Right ventricle myocardium superior (tissue), 1 donor: ENCODE measurements at regions of chr18 and their contacts with region 1.

Region 1: GRCh38 chr18:31983020-31983419 is 35.6 kb upstream of the RNF125 start:
- DNase-seq: no peak
- ATAC-seq: peak; percentile 73

Region 2: GRCh38 chr18:32018331-32019250 is 35.6 kb after region 1 on chr18 and contains the start of gene RNF125:
- intact Hi-C with region 1: loop called (anchors 5 kb)
- DNase-seq: peak; percentile 91
- ATAC-seq: peak; percentile 96
- total RNA-seq, gene RNF125: 3.8 TPM